ENCODE measurements at regions of chr12 and their contacts with region 1.

Region 1: GRCh38 chr12:32755654-32756475 is at the start of gene YARS2:
- DNase-seq: peak; percentile 96
- total RNA-seq, gene YARS2: 11.6 TPM

Region 2: GRCh38 chr12:32679091-32679919 is 76.6 kb before region 1 on chr12 and contains the start of gene DNM1L:
- intact Hi-C with region 1: loop called (anchors 1 kb)
- DNase-seq: peak; percentile 98
- total RNA-seq, gene DNM1L: 67.3 TPM

Region 3: GRCh38 chr12:32918890-32919801 is 163.3 kb after region 1 on chr12:
- intact Hi-C with region 1: loop called (anchors 5 kb)
- DNase-seq: no peak

Region 4: GRCh38 chr12:33605751-33606150 is 849.9 kb after region 1 on chr12:
- intact Hi-C with region 1: loop called (anchors 10 kb)
- DNase-seq: no peak

Region 5: GRCh38 chr12:34022079-34022830 is 1266.4 kb after region 1 on chr12 and contains the start of gene ALG10:
- intact Hi-C with region 1: loop called (anchors 1 kb)
- DNase-seq: peak; percentile 97
- total RNA-seq, gene ALG10: 3.5 TPM

Measured in cardiac septum (tissue), 1 donor.